ENCODE measurements at regions of chr11 and their contacts with region 1.

Region 1: DNA sequence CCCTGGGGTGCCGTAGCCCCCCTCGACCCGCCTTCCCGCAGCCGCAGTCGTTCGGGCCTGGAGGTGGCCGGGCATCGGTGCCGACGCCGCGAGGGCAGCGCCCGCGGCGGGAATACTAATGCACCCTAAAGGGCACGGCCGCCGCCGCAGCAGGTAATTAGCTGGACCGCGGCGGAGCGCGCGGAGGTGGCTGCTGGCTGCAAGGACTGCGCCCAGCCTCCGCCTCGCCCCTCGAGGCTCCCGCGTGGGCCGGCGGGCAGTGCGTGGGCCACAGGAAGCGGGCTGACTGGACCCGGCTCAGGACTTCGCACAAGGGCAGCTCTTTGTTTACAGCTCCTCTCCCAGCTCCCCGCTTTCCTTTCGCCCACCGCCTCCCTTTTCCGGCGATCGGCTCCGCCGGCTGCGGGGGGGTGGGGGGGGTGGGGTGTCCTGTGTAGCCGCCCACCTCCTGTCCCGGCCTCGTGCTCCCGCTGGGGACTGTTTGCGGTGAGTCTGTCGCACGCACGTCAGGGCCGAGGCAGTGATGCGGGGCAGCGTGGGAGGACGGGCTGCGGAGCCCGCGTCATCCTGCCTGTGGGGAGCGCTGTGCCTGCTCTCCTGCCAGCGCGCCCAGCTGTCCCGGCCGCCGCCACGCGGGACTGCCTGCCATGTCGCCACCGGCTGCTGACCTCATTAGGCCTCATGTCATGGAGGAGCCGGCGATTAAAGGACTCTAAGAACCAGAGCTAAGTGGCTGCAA is 53.2 kb downstream of the GRIK4 start:
- DNase-seq: peak; percentile 49 to 89 (median 80)
- H3K4me3 ChIP-seq: peak overlapping the region; percentile 39 to 74 (median 58)
- H3K27ac ChIP-seq: peak overlapping the region; percentile 81 to 99 (median 96)
- H3K27me3 ChIP-seq: peaks cover 0 to 3% (median 0%) of the 10 kb centered on the region in 45 donors
- CTCF ChIP-seq: peak in 45 of 56 donors; percentile 5 to 71 (median 40)

Region 2: GRCh38 chr11:120335908-120336640 is 228.7 kb before region 1 on chr11 and contains the start of gene ARHGEF12:
- intact Hi-C with region 1: loop called (anchors 5 kb)
- DNase-seq: peak; percentile 81 to 95 (median 91)
- H3K4me3 ChIP-seq: peak within 1 kb of the TSS; percentile 72 to 96 (median 89)
- H3K27ac ChIP-seq: peak within 1 kb of the TSS; percentile 83 to 99 (median 97)
- H3K27me3 ChIP-seq: no peaks in the 10 kb centered on the region
- CTCF ChIP-seq: peak in 46 of 56 donors; percentile 15 to 70 (median 45)
- total RNA-seq, gene ARHGEF12: 103 to 277 (median 191) TPM

Region 3: GRCh38 chr11:120372296-120372695 is 192.4 kb before region 1 on chr11:
- intact Hi-C with region 1: no loop called
- DNase-seq: no peak
- H3K4me3 ChIP-seq: no peak overlapping the region
- H3K27ac ChIP-seq: peak overlapping the region in 3 of 59 donors; percentile 8 to 33 (median 28)
- H3K27me3 ChIP-seq: no peaks in the 10 kb centered on the region
- CTCF ChIP-seq: no peak

Region 4: GRCh38 chr11:120432056-120433018 is 132.4 kb before region 1 on chr11:
- intact Hi-C with region 1: no loop called
- DNase-seq: no peak
- H3K4me3 ChIP-seq: no peak overlapping the region
- H3K27ac ChIP-seq: peak overlapping the region in 24 of 59 donors; percentile 3 to 67 (median 16)
- H3K27me3 ChIP-seq: no peaks in the 10 kb centered on the region
- CTCF ChIP-seq: no peak

Region 5: GRCh38 chr11:120482149-120482548 is 82.6 kb before region 1 on chr11:
- intact Hi-C with region 1: no loop called
- DNase-seq: no peak
- H3K4me3 ChIP-seq: no peak overlapping the region
- H3K27ac ChIP-seq: no peak overlapping the region
- H3K27me3 ChIP-seq: no peaks in the 10 kb centered on the region
- CTCF ChIP-seq: no peak

Region 6: GRCh38 chr11:120516461-120517389 is 48.0 kb before region 1 on chr11:
- intact Hi-C with region 1: loop called (anchors 1 to 2 kb)
- DNase-seq: peak in 1 of 10 donors; percentile 45
- H3K4me3 ChIP-seq: peak overlapping the region in 2 of 59 donors; percentile 5 to 9
- H3K27ac ChIP-seq: peak overlapping the region in 28 of 59 donors; percentile 0 to 81 (median 43)
- H3K27me3 ChIP-seq: no peaks in the 10 kb centered on the region
- CTCF ChIP-seq: no peak

Region 7: GRCh38 chr11:120547811-120548681 is 16.7 kb before region 1 on chr11:
- intact Hi-C with region 1: loop called in 1 of 2 experiments (anchors 2 kb)
- DNase-seq: peak; percentile 37 to 97 (median 94)
- H3K4me3 ChIP-seq: peak overlapping the region in 4 of 59 donors; percentile 12 to 30 (median 17)
- H3K27ac ChIP-seq: peak overlapping the region; percentile 21 to 94 (median 80)
- H3K27me3 ChIP-seq: no peaks in the 10 kb centered on the region
- CTCF ChIP-seq: peak in 19 of 56 donors; percentile 2 to 31 (median 14)

Region 8: GRCh38 chr11:120688163-120688562 is 123.4 kb after region 1 on chr11:
- intact Hi-C with region 1: loop called in 1 of 2 experiments (anchors 5 kb)
- DNase-seq: no peak
- H3K4me3 ChIP-seq: no peak overlapping the region
- H3K27ac ChIP-seq: no peak overlapping the region
- H3K27me3 ChIP-seq: no peaks in the 10 kb centered on the region
- CTCF ChIP-seq: no peak

Region 9: GRCh38 chr11:120801801-120802689 is 237.3 kb after region 1 on chr11:
- intact Hi-C with region 1: loop called in 1 of 2 experiments (anchors 5 kb)
- DNase-seq: peak; percentile 52 to 83 (median 72)
- H3K4me3 ChIP-seq: no peak overlapping the region
- H3K27ac ChIP-seq: no peak overlapping the region
- H3K27me3 ChIP-seq: no peaks in the 10 kb centered on the region
- CTCF ChIP-seq: peak; percentile 77 to 96 (median 89)

Region 10: GRCh38 chr11:120952461-120953434 is 388.0 kb after region 1 on chr11:
- intact Hi-C with region 1: loop called in 1 of 2 experiments (anchors 5 kb)
- DNase-seq: peak; percentile 40 to 85 (median 78)
- H3K4me3 ChIP-seq: peak overlapping the region in 37 of 59 donors; percentile 1 to 53 (median 33)
- H3K27ac ChIP-seq: peak overlapping the region in 7 of 59 donors; percentile 11 to 63 (median 31)
- H3K27me3 ChIP-seq: no peaks in the 10 kb centered on the region
- CTCF ChIP-seq: peak in 55 of 56 donors; percentile 43 to 87 (median 75)

Measured in dorsolateral prefrontal cortex (tissue), 120 donors.